HAP-1 (cell line): ENCODE measurements at regions of chr7 and their contacts with region 1.

Region 1: GRCh38 chr7:106041140-106041717 is 70.9 kb downstream of the SYPL1 start:
- DNase-seq: peak; percentile 56 to 77
- H3K4me3 ChIP-seq: no peak overlapping the region
- H3K4me1 ChIP-seq: peaks cover 3% of the 10 kb centered on the region
- H3K27me3 ChIP-seq: peaks cover 14% of the 10 kb centered on the region

Region 2: GRCh38 chr7:105473163-105473562 is 568.1 kb before region 1 on chr7:
- in situ Hi-C with region 1: no loop called
- DNase-seq: no peak
- H3K4me3 ChIP-seq: no peak overlapping the region
- H3K4me1 ChIP-seq: no peaks in the 10 kb centered on the region
- H3K27me3 ChIP-seq: no peaks in the 10 kb centered on the region

Region 3: DNA sequence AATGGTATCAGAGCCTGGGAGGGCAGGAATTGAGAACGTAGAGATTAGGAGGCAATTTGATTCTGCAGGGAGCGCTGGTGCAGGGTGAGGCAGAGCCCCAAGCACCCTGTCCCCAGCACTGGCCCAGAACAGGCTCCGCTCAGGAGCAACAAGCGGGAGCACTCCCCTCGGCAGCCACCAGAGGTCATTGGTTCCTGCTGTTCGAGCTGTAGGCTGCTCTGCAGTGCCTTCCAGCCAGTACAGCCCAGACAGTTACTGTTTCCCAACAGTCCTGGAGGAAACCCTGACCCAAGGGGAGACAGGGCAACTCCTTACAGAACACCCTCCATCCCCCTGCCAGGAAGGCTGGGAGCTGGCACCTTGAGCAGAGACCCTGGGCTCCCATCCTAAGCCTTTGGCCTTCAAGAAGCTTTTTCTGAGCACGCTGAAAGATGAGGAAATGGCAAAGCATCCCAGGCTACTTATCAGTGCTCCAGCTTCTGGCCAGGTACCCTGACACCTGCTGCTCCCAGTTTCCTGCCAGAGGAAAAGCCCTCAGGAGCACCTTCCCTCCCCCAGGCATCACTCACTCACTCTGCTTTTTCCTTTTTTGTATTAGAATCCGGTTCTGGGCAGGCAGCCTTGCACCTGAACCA is 388.8 kb before region 1 on chr7:
- in situ Hi-C with region 1: loop called (anchors 25 kb)
- DNase-seq: peak; percentile 68 to 86
- H3K4me3 ChIP-seq: no peak overlapping the region
- H3K4me1 ChIP-seq: peaks cover 7% of the 10 kb centered on the region
- H3K27me3 ChIP-seq: no peaks in the 10 kb centered on the region

Region 4: GRCh38 chr7:105769901-105770628 is 271.2 kb before region 1 on chr7:
- in situ Hi-C with region 1: loop called (anchors 5 kb)
- DNase-seq: peak; percentile 24 to 32
- H3K4me3 ChIP-seq: no peak overlapping the region
- H3K4me1 ChIP-seq: peaks cover 21% of the 10 kb centered on the region
- H3K27me3 ChIP-seq: no peaks in the 10 kb centered on the region